ENCODE measurements at regions of chr4 and their contacts with region 1.

Region 1: DNA sequence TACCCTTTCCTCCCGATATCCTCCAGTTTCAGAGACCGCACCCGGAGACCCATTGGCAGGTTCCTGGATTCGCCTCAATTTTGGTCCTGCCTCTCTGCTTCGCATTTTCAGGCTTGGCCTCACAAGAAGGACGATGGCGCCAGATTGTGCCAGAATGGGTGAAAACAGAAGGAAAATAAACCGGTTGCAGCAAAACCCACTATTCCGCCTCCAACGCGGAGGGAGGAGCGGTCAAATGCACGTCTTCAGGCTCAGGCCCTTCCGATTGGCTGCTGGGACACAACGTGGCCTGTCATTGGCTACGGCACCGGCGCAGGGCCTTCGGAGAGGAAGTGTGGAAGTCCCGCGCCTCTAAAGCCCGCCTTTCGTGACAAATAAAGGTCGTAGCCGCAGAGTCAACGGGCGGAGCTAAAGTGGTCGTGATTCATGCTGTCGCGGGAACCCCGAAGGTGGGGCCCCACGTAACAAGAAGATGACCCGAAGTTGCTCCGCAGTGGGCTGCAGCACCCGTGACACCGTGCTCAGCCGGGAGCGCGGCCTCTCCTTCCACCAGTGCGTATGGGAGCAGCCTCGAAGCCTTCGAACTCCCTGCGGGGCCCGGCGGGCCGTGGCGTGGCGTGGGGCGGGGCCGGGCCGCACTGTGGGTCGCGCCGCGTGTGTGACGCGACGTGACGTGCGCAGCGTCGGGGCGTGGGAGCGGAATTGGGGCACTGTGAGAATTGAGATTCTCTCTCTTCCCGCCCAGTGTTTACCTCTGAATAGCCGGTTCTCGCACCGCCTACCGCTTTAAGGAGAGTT is at the start of gene THAP9:
- DNase-seq: peak; percentile 99
- H3K4me3 Mint-ChIP-seq: no peak within 1 kb of the TSS
- H3K27ac Mint-ChIP-seq: no peak within 1 kb of the TSS
- H3K4me1 Mint-ChIP-seq: peaks cover 41% of the 10 kb centered on the region
- H3K27me3 Mint-ChIP-seq: no peaks in the 10 kb centered on the region
- total RNA-seq, gene THAP9: 2.7 to 3.3 TPM

Region 2: DNA sequence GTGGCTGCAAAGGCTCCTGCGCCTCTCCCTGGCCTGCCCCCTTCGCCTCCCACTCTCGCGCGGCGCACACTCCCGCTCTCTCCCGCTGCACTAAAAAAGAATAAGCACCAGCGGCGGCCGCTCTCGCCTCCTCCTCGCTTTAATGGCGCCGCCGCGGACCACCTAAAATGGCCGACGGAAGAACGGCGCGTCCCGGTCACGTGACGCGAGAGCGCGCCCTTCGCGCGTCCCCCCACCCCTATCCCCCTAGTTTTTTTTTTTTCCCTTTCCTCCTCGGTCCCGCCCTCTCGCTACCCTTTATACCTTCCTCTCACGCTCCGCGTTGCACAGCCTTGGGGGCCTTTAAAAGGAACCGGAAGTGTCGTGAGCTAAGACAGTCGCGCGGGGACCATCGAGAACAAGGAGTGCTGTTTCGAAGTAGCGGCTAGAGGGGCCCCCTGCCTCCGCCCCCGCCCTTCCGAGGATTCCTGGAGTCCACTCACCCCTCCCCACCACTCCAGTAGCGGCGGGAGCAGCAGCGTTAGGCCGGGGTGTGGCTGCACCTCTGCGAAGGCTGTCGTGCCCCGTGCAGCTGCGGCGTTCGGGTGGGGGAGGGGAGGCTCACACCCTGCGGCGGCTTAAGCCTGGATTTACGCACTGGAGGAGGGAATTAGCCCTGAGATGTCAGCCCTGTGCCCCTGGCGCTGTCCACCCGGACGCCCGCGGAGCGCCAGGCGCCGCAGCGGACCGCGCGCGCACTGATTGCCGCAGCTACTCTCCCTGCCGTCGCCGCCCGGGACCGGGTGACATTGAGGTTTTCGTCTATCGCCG is 526.5 kb before region 1 on chr4 and contains the start of gene HNRNPD:
- CTCF ChIA-PET with region 1: no interaction called
- intact Hi-C with region 1: loop called (anchors 1 kb)
- DNase-seq: peak; percentile 96
- H3K4me3 Mint-ChIP-seq: peak within 1 kb of the TSS; percentile 95
- H3K27ac Mint-ChIP-seq: peak within 1 kb of the TSS; percentile 95
- H3K4me1 Mint-ChIP-seq: peaks cover 33% of the 10 kb centered on the region
- H3K27me3 Mint-ChIP-seq: no peaks in the 10 kb centered on the region
- total RNA-seq, gene HNRNPD: 340 to 367 TPM

Region 3: GRCh38 chr4:82739316-82740179 is 161.0 kb before region 1 on chr4:
- CTCF ChIA-PET with region 1: no interaction called
- intact Hi-C with region 1: no loop called
- DNase-seq: peak; percentile 85
- H3K4me3 Mint-ChIP-seq: no peak overlapping the region
- H3K27ac Mint-ChIP-seq: no peak overlapping the region
- H3K4me1 Mint-ChIP-seq: no peaks in the 10 kb centered on the region
- H3K27me3 Mint-ChIP-seq: no peaks in the 10 kb centered on the region

Region 4: DNA sequence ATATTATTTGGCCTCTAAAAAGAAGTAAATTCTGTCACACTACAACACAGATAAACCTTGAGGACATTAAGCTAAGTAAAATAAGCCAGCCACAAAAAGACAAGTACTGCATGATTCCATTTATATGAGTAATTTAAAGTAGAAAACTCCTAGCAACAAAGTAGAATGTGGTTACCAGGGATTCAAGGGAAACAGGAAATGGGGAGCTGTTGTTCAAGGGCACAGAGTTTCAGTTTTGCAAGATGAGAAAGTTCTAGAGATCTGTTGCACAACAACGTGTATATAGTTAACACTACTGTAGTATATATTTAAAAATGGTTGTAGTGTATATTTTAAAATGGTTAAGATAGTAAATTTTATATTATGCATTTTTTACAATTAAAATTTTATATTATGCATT is 34.9 kb before region 1 on chr4:
- CTCF ChIA-PET with region 1: no interaction called
- intact Hi-C with region 1: loop called (anchors 1 kb)
- DNase-seq: peak; percentile 27
- H3K4me3 Mint-ChIP-seq: no peak overlapping the region
- H3K27ac Mint-ChIP-seq: no peak overlapping the region
- H3K4me1 Mint-ChIP-seq: peaks cover 28% of the 10 kb centered on the region
- H3K27me3 Mint-ChIP-seq: no peaks in the 10 kb centered on the region

Region 5: GRCh38 chr4:83074086-83074704 is 173.7 kb after region 1 on chr4:
- CTCF ChIA-PET with region 1: no interaction called
- intact Hi-C with region 1: loop called (anchors 1 kb)
- DNase-seq: peak; percentile 76
- H3K4me3 Mint-ChIP-seq: no peak overlapping the region
- H3K27ac Mint-ChIP-seq: no peak overlapping the region
- H3K4me1 Mint-ChIP-seq: peaks cover 13% of the 10 kb centered on the region
- H3K27me3 Mint-ChIP-seq: no peaks in the 10 kb centered on the region

Region 6: GRCh38 chr4:83231620-83232076 is 331.1 kb after region 1 on chr4:
- CTCF ChIA-PET with region 1: interaction called, 7 read pairs
- intact Hi-C with region 1: loop called (anchors 1 kb)
- DNase-seq: peak; percentile 68
- H3K4me3 Mint-ChIP-seq: no peak overlapping the region
- H3K27ac Mint-ChIP-seq: peak overlapping the region; percentile 16
- H3K4me1 Mint-ChIP-seq: peaks cover 46% of the 10 kb centered on the region
- H3K27me3 Mint-ChIP-seq: peaks cover 3% of the 10 kb centered on the region

Region 7: DNA sequence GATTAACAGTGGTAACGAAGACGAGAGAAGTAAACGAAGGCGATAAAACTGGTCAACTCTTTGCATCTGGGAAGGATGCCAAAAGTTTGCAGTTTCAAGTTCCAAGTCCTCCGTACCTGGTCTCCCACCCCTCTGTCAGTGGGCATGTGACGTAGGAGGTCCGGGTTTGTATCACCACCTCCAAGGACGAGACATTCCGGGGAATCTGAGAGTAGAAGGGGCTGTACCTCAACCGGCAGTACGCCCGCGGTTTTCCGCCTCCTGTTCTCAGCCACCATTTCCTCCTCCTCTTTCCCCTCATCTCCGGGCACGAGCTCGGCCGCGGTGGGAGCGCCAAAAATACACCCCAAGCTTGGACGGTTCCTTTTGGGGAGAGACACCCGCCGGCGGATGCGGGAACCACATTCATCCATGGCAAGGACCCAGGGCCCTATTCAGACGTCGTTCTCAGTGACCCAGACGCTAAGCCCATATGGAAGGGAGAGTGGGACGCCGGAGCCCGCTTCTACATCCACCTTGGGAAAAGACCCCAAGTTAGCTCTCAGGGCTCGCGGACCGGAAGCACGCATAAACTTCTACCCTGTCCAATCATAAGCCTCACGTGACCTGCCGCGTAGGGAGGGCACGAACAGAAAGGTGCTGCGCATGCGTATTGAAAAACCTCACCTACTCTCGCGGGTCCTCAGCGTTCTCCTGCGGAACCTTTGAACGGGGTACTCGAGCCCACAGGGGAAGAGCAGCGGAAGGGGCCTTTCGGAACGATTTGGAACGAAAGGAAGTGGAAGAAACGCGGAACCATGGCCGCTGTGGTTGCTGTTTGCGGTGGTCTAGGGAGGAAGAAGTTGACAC is 555.0 kb after region 1 on chr4 and contains the starts of genes HELQ and MRPS18C:
- CTCF ChIA-PET with region 1: interaction called, 3 read pairs
- intact Hi-C with region 1: loop called (anchors 1 kb)
- DNase-seq: peak; percentile 98
- H3K4me3 Mint-ChIP-seq: peak within 1 kb of the TSS; percentile 100
- H3K27ac Mint-ChIP-seq: peak within 1 kb of the TSS; percentile 100
- H3K4me1 Mint-ChIP-seq: peaks cover 44% of the 10 kb centered on the region
- H3K27me3 Mint-ChIP-seq: no peaks in the 10 kb centered on the region
- total RNA-seq, gene HELQ: 7.9 to 10.9 TPM
- total RNA-seq, gene MRPS18C: 67.2 to 69.9 TPM

Region 8: GRCh38 chr4:84582302-84583000 is 1681.9 kb after region 1 on chr4:
- CTCF ChIA-PET with region 1: no interaction called
- intact Hi-C with region 1: loop called (anchors 10 kb)
- DNase-seq: peak; percentile 95
- H3K4me3 Mint-ChIP-seq: peak overlapping the region; percentile 69
- H3K27ac Mint-ChIP-seq: no peak overlapping the region
- H3K4me1 Mint-ChIP-seq: peaks cover 12% of the 10 kb centered on the region
- H3K27me3 Mint-ChIP-seq: peaks cover 34% of the 10 kb centered on the region

Measured in activated naive CD4-positive, alpha-beta T cell treated with anti-CD3 and anti-CD28 coated beads for 36 hours (primary cell).